Activated CD8-positive, alpha-beta T cell treated with anti-CD3 and anti-CD28 coated beads, Interleukin-2, amount 10 ng/mL, durations not matched to agents 7 days and 5 days (primary cell): ENCODE measurements at regions of chr17 and their contacts with region 1.

Region 1: DNA sequence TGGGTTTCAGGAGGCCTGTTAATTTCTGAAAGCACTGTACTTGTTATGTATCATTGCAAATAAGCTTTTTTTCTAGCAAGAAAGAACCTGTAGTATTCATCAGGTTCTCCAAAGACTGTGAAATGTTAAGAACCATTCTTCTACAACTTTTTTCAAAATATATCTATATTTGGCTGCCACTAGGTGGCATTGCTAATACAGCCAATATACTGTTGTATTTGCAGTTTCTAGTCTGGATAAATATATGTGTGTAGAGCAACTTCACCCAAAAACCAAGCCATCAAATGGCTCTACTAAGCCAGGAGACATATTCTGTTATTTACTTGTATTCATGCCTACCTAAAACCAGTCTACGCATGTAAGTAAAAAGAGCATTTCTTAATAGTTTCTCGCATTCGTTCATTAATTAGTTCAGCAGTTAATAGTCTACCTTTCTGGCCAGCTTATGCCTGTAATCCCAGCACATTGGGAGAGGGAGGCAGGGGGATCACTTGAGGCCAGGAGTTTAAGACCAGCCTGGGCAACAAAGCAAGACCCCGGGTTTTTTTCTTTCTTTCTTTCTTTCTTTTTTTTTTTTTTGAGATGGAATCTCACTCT is 39.5 kb downstream of the VMP1 start:
- DNase-seq: no peak
- ATAC-seq: peak; percentile 71
- H3K4me3 Mint-ChIP-seq: no peak overlapping the region
- H3K27ac Mint-ChIP-seq: no peak overlapping the region
- H3K4me1 Mint-ChIP-seq: peaks cover 12% of the 10 kb centered on the region
- H3K27me3 Mint-ChIP-seq: no peaks in the 10 kb centered on the region

Region 2: GRCh38 chr17:59892924-59893676 is 146.2 kb after region 1 on chr17 and contains the starts of genes RPS6KB1 and TUBD1:
- CTCF ChIA-PET with region 1: interaction called, 21 read pairs
- POLR2A ChIA-PET with region 1: no interaction called
- DNase-seq: peak; percentile 99
- ATAC-seq: peak; percentile 96
- H3K4me3 Mint-ChIP-seq: peak within 1 kb of the TSS; percentile 100
- H3K27ac Mint-ChIP-seq: peak within 1 kb of the TSS; percentile 99
- H3K4me1 Mint-ChIP-seq: peaks cover 49% of the 10 kb centered on the region
- H3K27me3 Mint-ChIP-seq: no peaks in the 10 kb centered on the region
- total RNA-seq, gene RPS6KB1: 47.5 to 48.7 TPM
- total RNA-seq, gene TUBD1: 14.5 to 14.7 TPM

Region 3: DNA sequence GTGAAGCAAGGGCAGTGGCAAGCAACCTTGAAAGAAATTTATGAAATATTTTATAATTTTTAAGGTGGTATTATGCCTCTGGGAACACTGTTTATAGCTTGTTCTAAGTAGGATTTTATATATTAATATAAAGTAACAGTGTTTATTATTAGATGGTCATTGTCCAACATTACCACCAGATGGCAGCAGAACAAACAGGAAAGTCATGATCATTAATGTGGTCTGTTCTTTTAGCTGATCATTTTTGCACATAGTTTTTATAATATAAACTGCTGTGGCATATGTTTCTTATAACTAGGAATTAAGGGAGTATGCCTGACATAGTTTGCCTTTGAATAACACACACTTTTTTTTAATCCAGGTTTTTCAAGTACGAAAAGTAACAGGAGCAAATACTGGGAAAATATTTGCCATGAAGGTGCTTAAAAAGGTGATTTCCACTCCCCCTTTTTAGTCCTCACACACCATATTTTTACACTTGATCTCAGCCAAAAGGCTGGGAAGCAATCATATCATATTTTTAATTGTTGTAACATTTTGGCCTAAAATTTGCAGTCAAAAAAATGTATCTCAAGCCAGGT is 167.4 kb after region 1 on chr17:
- CTCF ChIA-PET with region 1: interaction called, 11 read pairs
- POLR2A ChIA-PET with region 1: no interaction called
- DNase-seq: peak; percentile 35
- ATAC-seq: peak; percentile 69
- H3K4me3 Mint-ChIP-seq: no peak overlapping the region
- H3K27ac Mint-ChIP-seq: no peak overlapping the region
- H3K4me1 Mint-ChIP-seq: no peaks in the 10 kb centered on the region
- H3K27me3 Mint-ChIP-seq: no peaks in the 10 kb centered on the region